Posterior vena cava (tissue), 2 donors: ENCODE measurements at regions of chr6 and their contacts with region 1.

Region 1: GRCh38 chr6:835476-836160 is 142.7 kb upstream of the EXOC2 start:
- DNase-seq: no peak

Region 2: GRCh38 chr6:865846-866245 is 30.2 kb after region 1 on chr6:
- intact Hi-C with region 1: loop called in 1 of 2 experiments (anchors 1 kb)
- DNase-seq: no peak